ENCODE measurements at regions of chr20 and their contacts with region 1.

Region 1: DNA sequence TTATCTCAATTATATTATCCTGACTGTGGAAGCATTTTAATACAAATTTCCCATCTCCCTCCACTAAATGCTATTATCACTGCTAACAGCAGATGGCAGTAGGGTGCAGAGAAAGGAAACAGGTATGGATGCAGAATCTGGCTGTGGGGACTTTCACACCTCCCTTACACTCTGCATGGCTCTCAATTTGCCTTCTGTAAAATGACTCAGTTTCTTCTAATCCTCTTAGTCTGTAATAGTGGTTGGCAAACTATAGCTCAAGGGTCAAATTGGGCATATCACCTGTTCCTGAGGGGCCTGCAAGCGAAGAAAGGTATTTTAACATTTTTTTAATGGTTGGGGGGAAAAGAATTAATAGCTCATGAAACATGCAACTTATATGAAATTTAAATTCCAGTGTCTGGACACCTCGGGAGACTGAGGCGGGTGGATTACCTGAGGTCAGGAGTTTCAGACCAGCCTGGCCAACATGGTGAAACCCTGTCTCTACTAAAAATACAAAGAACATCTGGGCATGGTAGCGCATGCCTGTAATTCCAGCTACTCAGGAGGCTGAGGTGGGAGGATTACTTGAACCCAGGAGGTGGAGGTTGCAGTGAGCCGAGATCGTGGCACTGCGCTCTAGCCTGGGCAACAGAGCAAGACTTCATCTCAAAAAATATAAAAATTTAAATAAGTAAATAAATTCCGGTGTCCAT is 83.5 kb downstream of the ZMYND8 start:
- DNase-seq: peak; percentile 60
- H3K4me3 ChIP-seq: no peak overlapping the region
- H3K27ac ChIP-seq: peak overlapping the region; percentile 94
- H3K4me1 ChIP-seq: peaks cover 39% of the 10 kb centered on the region
- H3K27me3 ChIP-seq: no peaks in the 10 kb centered on the region
- CTCF ChIP-seq: peak; percentile 88 to 93

Region 2: GRCh38 chr20:47164140-47164539 is 108.9 kb before region 1 on chr20:
- CTCF ChIA-PET with region 1: no interaction called
- dilution Hi-C with region 1: no loop called
- in situ Hi-C with region 1: no loop called
- intact Hi-C with region 1: no loop called
- DNase-seq: no peak
- H3K4me3 ChIP-seq: no peak overlapping the region
- H3K27ac ChIP-seq: no peak overlapping the region
- H3K4me1 ChIP-seq: no peaks in the 10 kb centered on the region
- H3K27me3 ChIP-seq: no peaks in the 10 kb centered on the region
- CTCF ChIP-seq: no peak

Region 3: DNA sequence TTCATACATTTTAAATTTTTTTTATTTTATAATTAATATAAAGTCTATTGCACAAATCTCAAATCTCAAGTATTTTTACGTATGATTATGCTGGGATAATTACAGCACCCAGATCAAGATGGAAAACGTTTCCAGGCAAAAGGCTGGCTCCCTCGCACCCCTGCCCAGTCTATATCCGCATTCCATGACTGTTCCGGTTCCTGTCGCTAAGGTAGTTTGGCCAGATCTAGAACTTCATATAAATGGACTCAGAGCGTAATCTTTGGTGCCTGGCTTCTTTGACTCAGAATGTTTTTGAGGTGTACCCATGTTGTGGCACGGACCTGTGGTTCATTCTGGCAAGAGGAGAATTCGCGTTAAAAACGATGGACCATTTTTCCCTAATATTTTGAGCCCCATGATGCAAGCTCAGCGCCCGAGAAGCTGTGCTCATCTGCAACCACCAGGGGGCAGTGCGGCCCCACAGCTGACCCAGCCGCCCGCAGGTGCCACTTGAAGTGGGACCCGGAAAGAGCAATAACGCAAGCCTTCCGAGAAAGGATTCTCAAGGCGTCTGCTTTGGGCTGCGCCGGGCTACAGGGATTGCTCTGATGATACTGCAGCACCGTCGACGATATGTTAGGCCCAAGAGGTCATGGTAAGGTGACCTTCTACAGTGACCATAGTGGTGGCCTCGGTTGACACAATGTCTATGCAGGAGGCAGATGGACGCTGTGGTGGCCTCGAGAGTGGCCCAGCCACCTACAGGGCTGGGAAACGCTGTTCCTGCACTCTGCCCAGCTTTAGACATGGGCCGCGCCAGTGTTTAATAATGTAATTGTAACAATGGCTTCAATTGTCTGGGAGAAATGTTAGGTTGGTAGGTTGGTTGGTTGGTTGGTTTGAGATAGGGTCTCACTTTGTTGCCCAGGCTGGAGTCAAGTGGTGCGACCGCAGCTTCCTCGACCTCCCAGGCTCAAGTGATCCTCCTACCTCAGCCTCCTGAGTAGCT is 76.7 kb before region 1 on chr20:
- CTCF ChIA-PET with region 1: interaction called, 4 read pairs
- dilution Hi-C with region 1: no loop called
- in situ Hi-C with region 1: no loop called
- intact Hi-C with region 1: loop called (anchors 1 kb)
- DNase-seq: peak; percentile 47
- H3K4me3 ChIP-seq: no peak overlapping the region
- H3K27ac ChIP-seq: no peak overlapping the region
- H3K4me1 ChIP-seq: peaks cover 10% of the 10 kb centered on the region
- H3K27me3 ChIP-seq: no peaks in the 10 kb centered on the region
- CTCF ChIP-seq: peak; percentile 86 to 96

Region 4: DNA sequence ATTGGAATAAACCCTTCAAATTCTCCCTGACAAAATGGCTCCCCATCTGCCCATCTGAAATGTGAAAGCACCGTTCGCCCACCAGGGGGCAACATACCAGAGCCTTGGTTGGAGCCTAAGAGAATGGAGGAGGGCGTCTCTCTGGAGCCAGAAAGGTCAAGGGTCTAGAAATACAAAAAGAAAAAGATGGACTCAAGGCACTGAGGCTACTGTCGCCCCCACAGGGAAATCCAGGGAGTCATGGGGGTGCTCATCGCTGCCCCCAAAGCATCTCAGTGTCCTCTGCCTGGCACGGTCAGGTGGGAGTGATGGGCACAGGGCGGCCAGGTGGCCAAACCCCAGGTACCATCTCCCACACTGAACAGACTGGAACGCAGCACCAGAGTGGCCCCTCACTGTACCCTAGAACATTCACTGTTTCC is 52.9 kb before region 1 on chr20:
- CTCF ChIA-PET with region 1: interaction called, 19 read pairs
- dilution Hi-C with region 1: no loop called
- in situ Hi-C with region 1: no loop called
- intact Hi-C with region 1: no loop called
- DNase-seq: no peak
- H3K4me3 ChIP-seq: no peak overlapping the region
- H3K27ac ChIP-seq: no peak overlapping the region
- H3K4me1 ChIP-seq: no peaks in the 10 kb centered on the region
- H3K27me3 ChIP-seq: no peaks in the 10 kb centered on the region
- CTCF ChIP-seq: peak; percentile 64 to 68

Region 5: GRCh38 chr20:47304287-47304686 is 31.2 kb after region 1 on chr20:
- CTCF ChIA-PET with region 1: no interaction called
- dilution Hi-C with region 1: no loop called
- in situ Hi-C with region 1: no loop called
- intact Hi-C with region 1: no loop called
- DNase-seq: no peak
- H3K4me3 ChIP-seq: no peak overlapping the region
- H3K27ac ChIP-seq: no peak overlapping the region
- H3K4me1 ChIP-seq: peaks cover 6% of the 10 kb centered on the region
- H3K27me3 ChIP-seq: no peaks in the 10 kb centered on the region
- CTCF ChIP-seq: peak in 1 of 2 donors; percentile 8

Region 6: DNA sequence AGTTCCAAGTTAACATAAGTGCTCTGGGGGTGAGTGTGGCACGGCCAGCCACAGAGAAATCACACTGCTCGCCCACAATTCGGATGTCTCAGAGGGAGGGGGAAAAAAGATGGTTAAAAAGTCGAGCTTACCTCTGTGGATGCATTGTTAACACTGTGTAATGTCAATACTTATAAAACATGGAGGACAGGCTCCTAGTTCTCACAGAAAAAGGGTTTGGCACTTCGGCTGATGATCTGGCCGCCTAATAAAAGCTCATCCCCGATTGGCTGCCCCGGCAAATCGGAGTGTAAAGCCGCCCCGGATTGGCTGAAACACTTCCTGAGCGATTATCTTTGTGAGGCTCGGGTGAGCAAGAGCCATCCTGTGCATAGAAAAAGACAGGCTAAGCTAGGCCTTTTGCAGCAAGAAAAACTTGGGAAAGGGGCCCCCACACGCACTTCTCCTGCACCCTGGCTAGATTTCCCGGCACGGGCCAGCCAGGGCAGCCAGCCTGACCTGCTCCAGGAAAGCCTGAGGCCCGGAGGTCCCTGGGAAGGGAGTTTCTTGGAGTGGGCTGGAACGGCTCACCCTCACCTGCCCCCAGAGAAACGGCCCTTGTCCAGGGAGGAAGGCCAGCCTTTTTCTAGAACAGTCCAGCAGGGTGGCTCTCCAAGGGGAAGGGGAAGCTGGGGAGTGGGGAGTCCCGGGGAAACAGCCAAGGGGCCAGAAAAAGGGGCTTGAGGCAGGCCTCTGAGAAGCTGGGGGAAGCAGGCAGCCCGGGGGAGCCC is 83.7 kb after region 1 on chr20 and contains the start of gene ZMYND8:
- CTCF ChIA-PET with region 1: interaction called, 5 read pairs
- dilution Hi-C with region 1: no loop called
- in situ Hi-C with region 1: no loop called
- intact Hi-C with region 1: loop called (anchors 2 kb)
- DNase-seq: peak; percentile 95
- H3K4me3 ChIP-seq: peak within 1 kb of the TSS; percentile 36 to 46 (median 45)
- H3K27ac ChIP-seq: peak within 1 kb of the TSS; percentile 94
- H3K4me1 ChIP-seq: peaks cover 98% of the 10 kb centered on the region
- H3K27me3 ChIP-seq: no peaks in the 10 kb centered on the region
- CTCF ChIP-seq: no peak
- total RNA-seq, gene ZMYND8: 18.7 to 59.6 TPM

Region 7: DNA sequence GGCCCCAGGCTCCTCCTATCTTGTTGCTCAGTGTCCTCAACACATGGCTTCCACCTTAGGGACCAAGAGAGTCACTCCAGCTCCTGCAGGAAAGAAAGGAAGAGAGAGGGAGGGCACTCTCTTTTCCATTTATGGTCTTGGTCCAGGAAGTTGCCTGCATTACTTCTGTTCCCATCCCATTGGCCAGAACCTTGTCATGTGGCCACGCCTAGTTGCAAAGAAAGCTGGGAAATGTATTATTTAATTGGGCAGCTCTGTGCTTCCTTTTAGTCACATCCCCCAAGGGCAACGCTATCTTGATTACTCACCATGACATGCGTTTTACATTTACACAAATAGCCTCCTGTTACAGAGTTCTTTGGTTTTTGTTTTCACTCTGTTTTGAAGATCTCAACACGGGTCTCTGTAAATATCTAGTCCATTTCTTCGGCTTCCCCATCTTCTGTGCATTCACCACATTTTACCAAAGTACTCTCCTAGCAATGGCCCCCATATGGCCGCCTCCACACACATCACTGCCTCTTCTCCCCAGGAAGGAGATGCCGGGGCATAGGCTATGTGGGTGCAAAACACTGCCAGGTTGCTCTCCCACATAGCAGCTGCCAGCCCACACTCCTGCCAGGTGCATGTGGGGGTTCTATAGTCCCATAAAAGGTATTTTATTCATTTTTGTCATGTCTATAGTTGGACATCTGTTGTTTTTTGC is 119.1 kb after region 1 on chr20:
- CTCF ChIA-PET with region 1: no interaction called
- dilution Hi-C with region 1: no loop called
- in situ Hi-C with region 1: loop called in 1 of 2 experiments (anchors 10 kb)
- intact Hi-C with region 1: no loop called
- DNase-seq: peak; percentile 97
- H3K4me3 ChIP-seq: no peak overlapping the region
- H3K27ac ChIP-seq: peak overlapping the region; percentile 99
- H3K4me1 ChIP-seq: peaks cover 21% of the 10 kb centered on the region
- H3K27me3 ChIP-seq: no peaks in the 10 kb centered on the region
- CTCF ChIP-seq: no peak

Region 8: GRCh38 chr20:47501483-47502270 is 228.6 kb after region 1 on chr20 and contains the start of gene NCOA3:
- CTCF ChIA-PET with region 1: no interaction called
- dilution Hi-C with region 1: no loop called
- in situ Hi-C with region 1: no loop called
- intact Hi-C with region 1: loop called (anchors 5 kb)
- DNase-seq: peak; percentile 92
- H3K4me3 ChIP-seq: peak within 1 kb of the TSS; percentile 81 to 99 (median 96)
- H3K27ac ChIP-seq: peak within 1 kb of the TSS; percentile 66
- H3K4me1 ChIP-seq: peaks cover 13% of the 10 kb centered on the region
- H3K27me3 ChIP-seq: no peaks in the 10 kb centered on the region
- CTCF ChIP-seq: peak in 1 of 2 donors; percentile 62
- total RNA-seq, gene NCOA3: 26.7 to 29.6 TPM

Region 9: GRCh38 chr20:47642624-47643023 is 369.6 kb after region 1 on chr20:
- CTCF ChIA-PET with region 1: no interaction called
- dilution Hi-C with region 1: no loop called
- in situ Hi-C with region 1: loop called in 1 of 2 experiments (anchors 25 kb)
- intact Hi-C with region 1: no loop called
- DNase-seq: no peak
- H3K4me3 ChIP-seq: no peak overlapping the region
- H3K27ac ChIP-seq: no peak overlapping the region
- H3K4me1 ChIP-seq: no peaks in the 10 kb centered on the region
- H3K27me3 ChIP-seq: no peaks in the 10 kb centered on the region
- CTCF ChIP-seq: no peak

Measured in mammary epithelial cell (primary cell).